ENCODE measurements at regions of chr3 and their contacts with region 1.

Region 1: GRCh38 chr3:50292159-50293078 is at the start of gene IFRD2:
- DNase-seq: peak; percentile 99
- H3K4me3 Mint-ChIP-seq: peak within 1 kb of the TSS; percentile 94
- H3K27ac Mint-ChIP-seq: peak within 1 kb of the TSS; percentile 96
- H3K4me1 Mint-ChIP-seq: peaks cover 12% of the 10 kb centered on the region
- H3K27me3 Mint-ChIP-seq: no peaks in the 10 kb centered on the region
- total RNA-seq, gene IFRD2: 231 and 233 TPM in 2 replicates

Region 2: DNA sequence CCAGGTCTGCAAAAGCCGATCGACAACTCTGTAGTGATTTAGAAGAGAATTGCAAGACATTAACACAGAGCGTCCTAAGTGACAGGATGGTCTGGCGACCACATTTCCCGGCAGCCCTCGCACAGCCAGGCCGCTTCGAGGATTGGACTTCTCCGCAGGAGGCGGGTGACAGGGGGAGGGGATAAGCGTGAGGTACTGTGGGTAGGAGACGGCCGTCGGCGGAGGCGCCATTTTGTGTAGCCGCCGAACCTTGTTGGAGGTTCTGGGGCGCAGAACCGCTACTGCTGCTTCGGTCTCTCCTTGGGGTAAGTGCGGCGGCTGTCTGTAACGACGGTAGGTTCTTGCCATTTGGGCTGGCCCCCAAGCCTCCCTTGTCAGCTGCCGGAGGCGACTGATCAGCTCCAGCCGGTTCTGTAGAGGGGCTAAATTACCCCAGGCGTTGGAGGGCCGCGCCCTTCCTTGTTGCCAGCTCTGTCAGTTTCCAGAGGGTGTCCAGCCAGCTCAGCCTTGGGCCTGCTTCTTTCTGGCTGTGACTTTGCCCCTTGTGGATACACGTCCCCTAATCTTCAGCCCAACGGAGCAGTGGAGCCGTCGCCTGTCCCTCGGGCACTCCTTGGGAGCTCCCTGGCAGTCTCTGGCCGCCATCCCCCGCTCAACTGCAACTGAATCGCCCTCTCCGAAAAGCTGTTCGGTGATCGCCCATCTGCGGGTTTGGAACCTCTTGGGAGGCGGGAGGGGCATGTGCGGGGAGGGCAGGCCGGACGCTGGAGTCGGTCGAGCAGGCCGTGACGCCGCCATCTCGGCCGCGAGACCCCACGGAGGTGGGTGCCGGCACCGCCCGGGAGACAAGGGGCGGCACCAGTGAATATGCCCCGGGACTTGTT is 203.5 kb before region 1 on chr3 and contains the start of gene RBM5:
- intact Hi-C with region 1: loop called (anchors 1 kb)
- DNase-seq: peak; percentile 98
- H3K4me3 Mint-ChIP-seq: peak within 1 kb of the TSS; percentile 98
- H3K27ac Mint-ChIP-seq: peak within 1 kb of the TSS; percentile 97
- H3K4me1 Mint-ChIP-seq: peaks cover 21% of the 10 kb centered on the region
- H3K27me3 Mint-ChIP-seq: no peaks in the 10 kb centered on the region
- total RNA-seq, gene RBM5: 154 and 161 TPM in 2 replicates

Region 3: GRCh38 chr3:50327943-50328691 is 35.7 kb after region 1 on chr3 and contains the start of gene TUSC2:
- intact Hi-C with region 1: loop called (anchors 1 kb)
- DNase-seq: peak; percentile 99
- H3K4me3 Mint-ChIP-seq: peak within 1 kb of the TSS; percentile 84
- H3K27ac Mint-ChIP-seq: peak within 1 kb of the TSS; percentile 77
- H3K4me1 Mint-ChIP-seq: peaks cover 16% of the 10 kb centered on the region
- H3K27me3 Mint-ChIP-seq: no peaks in the 10 kb centered on the region
- total RNA-seq, gene TUSC2: 24.4 and 25.0 TPM in 2 replicates

Region 4: DNA sequence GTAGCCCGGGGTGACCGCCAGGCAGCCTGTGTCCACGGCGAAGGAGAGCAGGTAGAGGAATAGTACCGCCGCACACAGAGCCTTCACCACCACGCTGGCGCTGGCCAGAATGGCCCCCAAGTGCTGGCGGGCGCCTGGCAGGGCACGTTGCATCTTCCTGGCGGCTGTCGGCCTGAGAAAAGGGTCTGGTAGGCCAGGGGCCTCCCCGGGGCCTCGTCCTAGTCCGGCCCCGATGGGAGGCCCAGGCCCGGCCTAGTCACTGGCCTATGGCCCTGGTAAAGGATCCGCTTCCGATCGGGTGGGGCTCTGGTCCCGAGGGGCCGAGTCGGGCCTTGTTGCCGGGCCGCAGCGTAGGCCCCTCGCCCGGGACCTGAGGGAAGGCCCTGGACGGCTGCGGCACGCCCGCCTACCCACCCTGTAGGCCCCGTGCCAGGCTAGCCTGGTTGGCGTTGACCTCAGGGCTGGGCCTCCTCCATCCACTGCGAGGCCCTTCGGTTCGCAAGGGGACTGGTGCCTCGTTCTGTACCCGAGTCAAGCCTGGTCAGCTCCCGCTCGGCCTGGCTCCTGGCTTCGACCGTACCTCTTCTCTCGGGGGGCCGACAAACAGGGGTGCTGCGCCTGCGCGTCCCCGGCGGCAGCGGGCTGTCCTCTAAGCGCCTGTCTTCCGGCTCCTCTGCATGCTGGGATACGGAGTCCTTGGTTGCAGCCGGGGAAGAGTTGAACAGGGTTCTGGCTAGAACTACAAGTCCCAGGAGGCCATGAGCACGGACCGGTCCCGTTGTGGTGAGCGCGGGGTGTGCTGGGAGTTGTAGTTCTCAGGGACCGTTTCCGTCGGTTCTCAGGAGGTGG is 66.7 kb after region 1 on chr3 and contains the start of gene TMEM115:
- intact Hi-C with region 1: loop called (anchors 1 kb)
- DNase-seq: peak; percentile 98
- H3K4me3 Mint-ChIP-seq: peak within 1 kb of the TSS; percentile 98
- H3K27ac Mint-ChIP-seq: peak within 1 kb of the TSS; percentile 95
- H3K4me1 Mint-ChIP-seq: peaks cover 35% of the 10 kb centered on the region
- H3K27me3 Mint-ChIP-seq: no peaks in the 10 kb centered on the region
- total RNA-seq, gene TMEM115: 20.3 and 20.5 TPM in 2 replicates